Heart left ventricle (tissue), 16 donors: ENCODE measurements at regions of chrX and their contacts with region 1.

Region 1: DNA sequence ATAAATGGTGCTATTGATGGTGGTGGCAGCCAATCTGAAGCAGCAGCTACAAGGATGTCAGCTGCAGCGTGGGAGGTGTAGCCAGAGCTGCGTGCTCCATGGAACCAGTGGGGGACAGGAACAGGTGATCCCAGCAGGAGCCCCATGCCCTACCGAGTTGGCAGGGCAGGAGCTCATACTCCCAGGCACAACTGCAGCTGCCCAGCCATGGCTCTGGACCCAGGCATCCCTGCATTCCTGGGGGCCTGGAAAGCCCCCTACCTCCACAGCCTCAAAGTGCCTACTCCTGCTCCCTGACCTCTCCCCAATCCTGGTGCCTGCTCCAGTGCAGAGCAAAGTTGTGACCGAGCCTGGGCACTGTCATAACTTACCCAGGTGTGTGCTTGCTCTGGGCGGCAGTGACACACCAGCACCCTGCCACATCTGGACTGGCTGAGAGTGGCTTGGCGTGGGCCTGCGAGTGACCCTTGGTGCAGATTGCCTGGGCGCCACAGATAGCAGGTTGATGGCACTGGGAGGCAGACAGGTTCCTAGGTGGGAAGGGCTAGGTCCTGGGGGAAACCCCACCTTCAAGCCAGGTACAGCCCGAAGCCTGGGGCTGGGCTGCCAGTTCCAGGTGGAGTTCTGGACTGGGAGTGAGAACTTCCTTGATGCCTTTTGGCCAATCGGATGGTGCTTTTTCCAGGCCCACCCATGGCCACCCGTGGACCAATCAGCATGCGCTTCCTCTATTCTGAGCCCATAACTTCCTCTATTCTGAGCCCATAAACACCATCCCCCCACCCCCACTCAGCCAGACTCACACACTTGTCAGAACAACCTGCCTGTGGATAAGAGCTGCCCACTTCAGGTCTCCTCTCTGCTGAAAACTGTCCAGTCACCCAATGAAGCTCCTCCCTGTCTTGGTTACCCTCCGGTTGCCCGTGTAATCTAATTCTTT is 100.9 kb downstream of the DCAF12L2 start:
- DNase-seq: no peak
- ATAC-seq: no peak
- H3K4me3 ChIP-seq: no peak overlapping the region
- H3K27ac ChIP-seq: no peak overlapping the region
- H3K4me1 ChIP-seq: no peaks in the 10 kb centered on the region
- H3K27me3 ChIP-seq: no peaks in the 10 kb centered on the region
- CTCF ChIP-seq: no peak
- POLR2A ChIP-seq: no peak

Region 2: DNA sequence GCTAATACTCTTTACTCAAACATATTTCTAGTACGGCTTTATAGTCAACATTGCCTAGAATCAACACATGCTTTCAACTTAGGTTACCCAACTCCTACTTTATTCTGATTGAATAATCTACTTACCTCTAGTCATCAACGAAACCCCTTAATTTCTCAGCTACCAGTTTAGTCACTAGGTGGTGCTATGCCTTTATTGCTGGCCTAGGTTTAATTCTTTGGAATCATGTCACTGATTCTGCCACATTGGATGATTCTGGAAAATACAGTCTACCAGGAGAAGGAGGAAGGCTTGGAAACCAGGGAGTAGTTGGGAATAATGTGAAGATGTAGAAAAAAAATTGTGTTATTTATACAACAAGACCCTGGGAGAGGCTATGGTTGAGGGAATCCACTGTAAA is 66.7 kb before region 1 on chrX:
- intact Hi-C with region 1: no loop called
- DNase-seq: no peak
- ATAC-seq: no peak
- H3K4me3 ChIP-seq: no peak overlapping the region
- H3K27ac ChIP-seq: no peak overlapping the region
- H3K4me1 ChIP-seq: no peaks in the 10 kb centered on the region
- H3K27me3 ChIP-seq: no peaks in the 10 kb centered on the region
- CTCF ChIP-seq: peak in 8 of 12 donors; percentile 5 to 38 (median 16)
- POLR2A ChIP-seq: no peak

Region 3: GRCh38 chrX:126124721-126125120 is 59.5 kb after region 1 on chrX:
- intact Hi-C with region 1: loop called in 1 of 10 experiments (anchors 10 kb)
- DNase-seq: no peak
- ATAC-seq: no peak
- H3K4me3 ChIP-seq: no peak overlapping the region
- H3K27ac ChIP-seq: no peak overlapping the region
- H3K4me1 ChIP-seq: no peaks in the 10 kb centered on the region
- H3K27me3 ChIP-seq: no peaks in the 10 kb centered on the region
- CTCF ChIP-seq: no peak
- POLR2A ChIP-seq: no peak